ENCODE measurements at regions of chr20 and their contacts with region 1.

Region 1: DNA sequence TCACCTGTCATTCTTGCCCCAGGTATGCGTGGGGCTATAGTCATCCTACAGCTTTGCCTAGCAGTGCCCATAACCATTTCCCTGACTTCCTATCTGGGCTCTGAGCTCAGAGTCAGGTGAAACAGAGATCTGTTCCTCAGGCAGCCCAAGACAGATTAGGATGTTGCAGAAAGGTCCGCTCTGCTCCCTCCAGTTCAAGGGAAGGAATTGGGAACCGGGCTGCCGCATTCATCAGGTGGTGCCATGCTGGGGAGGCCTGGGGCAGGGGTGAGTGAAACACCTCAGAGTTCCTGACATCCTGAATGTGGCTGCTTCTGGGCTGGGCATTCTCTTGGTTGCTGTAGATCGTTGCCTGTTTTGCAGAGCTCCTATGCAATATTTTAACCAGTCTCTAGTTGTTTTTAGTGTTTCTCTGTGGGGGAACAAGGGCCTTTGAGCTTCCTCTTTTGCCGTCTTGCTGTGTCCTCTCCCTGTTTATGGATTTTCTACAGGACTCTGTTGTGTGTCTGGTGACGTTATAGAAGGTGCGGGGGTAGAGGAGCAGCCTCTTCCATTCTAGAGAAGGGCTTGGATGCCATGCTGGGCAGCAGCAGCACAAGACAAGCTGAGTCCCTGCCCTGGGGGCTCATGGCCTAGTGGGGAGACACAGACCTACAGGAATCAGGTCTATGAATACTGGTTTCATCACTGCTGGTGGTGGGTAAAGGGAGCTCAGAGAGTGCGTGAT is 9.2 kb downstream of the ENTPD6 start:
- DNase-seq: peak in 1 of 5 donors; percentile 5
- H3K4me3 ChIP-seq: no peak overlapping the region
- H3K27ac ChIP-seq: no peak overlapping the region
- H3K4me1 ChIP-seq: no peaks in the 10 kb centered on the region
- H3K27me3 ChIP-seq: no peaks in the 10 kb centered on the region
- CTCF ChIP-seq: no peak
- EP300 ChIP-seq: no peak
- POLR2A ChIP-seq: no peak

Region 2: DNA sequence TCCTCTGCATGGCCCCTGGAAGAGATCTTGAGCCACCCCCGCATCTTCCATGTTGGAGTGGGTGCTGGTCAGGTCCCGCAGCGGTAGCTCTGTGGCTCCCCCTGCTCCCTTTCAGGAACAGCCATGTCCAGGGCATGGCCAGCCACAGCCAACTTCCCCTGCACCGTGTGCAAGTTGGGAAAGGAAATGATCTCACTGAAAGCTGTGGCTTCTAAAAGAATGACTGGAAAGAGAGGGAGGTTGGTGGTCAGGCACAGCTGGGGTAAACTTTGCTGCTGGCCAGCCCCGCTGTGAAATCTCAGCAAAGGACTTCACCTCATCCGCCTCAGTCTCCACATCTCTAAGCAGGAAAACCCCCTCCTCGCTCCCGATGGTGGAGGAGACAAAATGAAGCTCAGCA is 409.3 kb before region 1 on chr20:
- intact Hi-C with region 1: no loop called
- DNase-seq: no peak
- H3K4me3 ChIP-seq: no peak overlapping the region
- H3K27ac ChIP-seq: no peak overlapping the region
- H3K4me1 ChIP-seq: no peaks in the 10 kb centered on the region
- H3K27me3 ChIP-seq: no peaks in the 10 kb centered on the region
- CTCF ChIP-seq: no peak
- EP300 ChIP-seq: no peak
- POLR2A ChIP-seq: no peak

Region 3: GRCh38 chr20:25223179-25223661 is 18.5 kb after region 1 on chr20:
- intact Hi-C with region 1: no loop called
- DNase-seq: no peak
- H3K4me3 ChIP-seq: no peak overlapping the region
- H3K27ac ChIP-seq: no peak overlapping the region
- H3K4me1 ChIP-seq: no peaks in the 10 kb centered on the region
- H3K27me3 ChIP-seq: no peaks in the 10 kb centered on the region
- CTCF ChIP-seq: no peak
- EP300 ChIP-seq: no peak
- POLR2A ChIP-seq: no peak

Region 4: GRCh38 chr20:25239387-25240053 is 34.8 kb after region 1 on chr20:
- intact Hi-C with region 1: loop called in 2 of 4 experiments (anchors 5 to 10 kb)
- DNase-seq: no peak
- H3K4me3 ChIP-seq: no peak overlapping the region
- H3K27ac ChIP-seq: no peak overlapping the region
- H3K4me1 ChIP-seq: peaks cover 4% of the 10 kb centered on the region
- H3K27me3 ChIP-seq: no peaks in the 10 kb centered on the region
- CTCF ChIP-seq: no peak
- EP300 ChIP-seq: no peak
- POLR2A ChIP-seq: no peak